Mammary epithelial cell (primary cell): ENCODE measurements at regions of chr1 and their contacts with region 1.

Region 1: GRCh38 chr1:116806245-116806644 is 52.0 kb downstream of the CD2 start:
- DNase-seq: no peak
- H3K4me3 ChIP-seq: no peak overlapping the region
- H3K27ac ChIP-seq: no peak overlapping the region
- H3K4me1 ChIP-seq: peaks cover 18% of the 10 kb centered on the region
- H3K27me3 ChIP-seq: no peaks in the 10 kb centered on the region
- CTCF ChIP-seq: no peak

Region 2: DNA sequence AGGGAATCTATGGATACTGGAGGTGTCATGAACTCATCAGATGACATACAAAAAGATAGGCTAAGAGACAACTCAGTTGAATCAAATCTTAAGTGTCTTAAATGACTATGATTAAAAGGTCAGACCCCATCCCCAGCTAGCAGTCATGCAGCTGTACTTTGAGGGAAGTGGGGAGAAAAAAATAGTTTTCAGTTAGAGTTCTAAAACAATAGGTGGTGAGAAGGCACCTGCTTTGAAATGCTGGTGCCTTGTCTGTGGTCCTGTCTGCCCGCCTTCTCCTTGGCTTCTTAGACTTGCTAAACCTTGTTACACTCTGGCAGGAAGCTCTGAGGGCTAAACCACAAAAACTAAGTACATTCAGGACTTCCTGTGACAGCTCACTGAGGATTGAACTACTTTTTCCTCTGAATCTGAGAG is 36.7 kb before region 1 on chr1:
- CTCF ChIA-PET with region 1: no interaction called
- dilution Hi-C with region 1: loop called (anchors 5 kb)
- in situ Hi-C with region 1: no loop called
- intact Hi-C with region 1: no loop called
- DNase-seq: peak; percentile 73
- H3K4me3 ChIP-seq: no peak overlapping the region
- H3K27ac ChIP-seq: no peak overlapping the region
- H3K4me1 ChIP-seq: peaks cover 12% of the 10 kb centered on the region
- H3K27me3 ChIP-seq: no peaks in the 10 kb centered on the region
- CTCF ChIP-seq: no peak

Region 3: DNA sequence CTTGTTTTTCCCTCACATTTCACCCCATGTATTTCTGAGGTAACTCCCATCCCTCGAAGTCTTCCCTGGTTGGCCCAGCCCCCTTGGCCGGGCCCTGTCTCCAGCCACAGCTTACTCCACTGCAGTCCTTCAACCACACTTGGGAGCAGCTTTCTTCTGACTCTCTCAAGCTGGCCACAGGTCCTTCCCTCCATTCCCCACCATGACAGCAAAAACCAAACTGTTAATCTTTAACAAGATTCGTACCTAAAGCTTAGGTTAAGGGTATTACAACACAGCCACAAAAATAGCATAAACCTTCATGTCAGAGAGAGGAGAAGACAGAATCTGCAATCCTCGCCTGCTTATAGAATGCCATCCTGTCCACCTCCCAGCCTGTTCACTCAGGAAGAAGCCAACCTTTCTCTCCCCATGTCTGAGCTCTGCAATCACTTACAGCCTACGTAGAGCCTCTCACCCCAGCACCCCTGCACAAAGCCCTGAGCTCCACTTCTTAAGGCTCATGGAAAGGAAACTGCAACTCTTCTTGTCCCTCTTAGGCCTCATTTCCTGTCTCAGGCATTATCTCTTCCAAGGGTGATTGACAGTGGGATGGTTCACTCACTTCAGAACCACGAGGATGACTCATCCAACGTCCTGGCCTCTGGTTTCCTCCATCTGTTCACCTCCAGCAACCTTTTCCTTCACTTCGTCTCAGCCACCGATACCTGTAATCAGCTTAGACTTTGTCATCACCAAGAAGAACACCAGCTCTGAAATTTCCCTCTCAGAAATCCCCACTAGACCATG is 20.8 kb after region 1 on chr1:
- CTCF ChIA-PET with region 1: no interaction called
- dilution Hi-C with region 1: no loop called
- in situ Hi-C with region 1: no loop called
- intact Hi-C with region 1: no loop called
- DNase-seq: peak; percentile 88
- H3K4me3 ChIP-seq: no peak overlapping the region
- H3K27ac ChIP-seq: no peak overlapping the region
- H3K4me1 ChIP-seq: peaks cover 11% of the 10 kb centered on the region
- H3K27me3 ChIP-seq: no peaks in the 10 kb centered on the region
- CTCF ChIP-seq: no peak

Region 4: DNA sequence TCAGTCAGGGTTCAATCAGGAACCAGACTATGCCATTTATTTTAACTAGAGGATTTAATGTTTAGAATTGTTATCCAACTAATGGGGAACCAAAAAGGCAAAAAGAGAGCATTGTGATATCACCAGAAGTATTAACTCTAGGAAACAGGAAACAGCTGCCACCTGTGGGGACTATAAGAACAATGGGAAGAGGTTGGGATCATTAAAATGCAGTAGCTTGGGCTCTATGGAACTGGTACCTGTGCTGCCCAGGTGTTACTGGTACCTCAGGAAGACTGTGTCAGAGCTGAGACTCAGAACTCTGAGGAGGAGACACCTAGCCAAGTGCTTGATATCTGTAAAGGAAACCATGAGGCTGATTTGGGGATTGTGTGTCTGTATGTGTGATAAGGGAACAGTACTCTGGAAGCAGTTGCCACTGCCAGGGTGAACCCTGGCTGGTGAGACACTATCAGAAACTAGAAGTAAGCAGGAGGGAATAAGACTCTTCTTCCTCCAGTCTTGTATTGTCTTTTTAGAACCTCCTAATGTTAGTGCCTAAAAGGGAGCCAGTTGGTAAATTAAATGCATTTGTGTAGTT is 610.4 kb after region 1 on chr1:
- CTCF ChIA-PET with region 1: no interaction called
- dilution Hi-C with region 1: no loop called
- in situ Hi-C with region 1: no loop called
- intact Hi-C with region 1: no loop called
- DNase-seq: no peak
- H3K4me3 ChIP-seq: no peak overlapping the region
- H3K27ac ChIP-seq: no peak overlapping the region
- H3K4me1 ChIP-seq: no peaks in the 10 kb centered on the region
- H3K27me3 ChIP-seq: no peaks in the 10 kb centered on the region
- CTCF ChIP-seq: no peak